ENCODE measurements at regions of chr9 and their contacts with region 1.

Region 1: DNA sequence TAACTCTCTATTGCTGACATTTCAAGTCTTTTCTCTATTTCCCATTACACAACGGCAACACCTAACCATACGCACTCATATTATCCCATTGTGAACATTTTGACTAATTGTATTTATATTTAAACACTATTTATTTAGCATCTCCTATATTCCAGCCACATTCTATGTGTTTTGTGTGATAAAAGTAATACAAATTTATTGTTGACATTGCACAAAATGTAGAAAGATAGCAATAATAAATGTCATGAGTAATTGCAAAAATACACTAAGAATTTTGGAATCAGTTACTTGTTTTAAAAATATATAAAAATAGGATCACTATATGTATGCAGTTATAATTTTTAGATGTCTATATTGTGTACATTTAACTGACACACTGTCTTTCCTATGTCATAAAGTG is 413.0 kb upstream of the PTPRD start:
- DNase-seq: no peak
- ATAC-seq: no peak
- H3K4me3 ChIP-seq: no peak overlapping the region
- H3K27ac ChIP-seq: no peak overlapping the region
- H3K4me1 ChIP-seq: no peaks in the 10 kb centered on the region
- H3K27me3 ChIP-seq: no peaks in the 10 kb centered on the region
- CTCF ChIP-seq: no peak
- EP300 ChIP-seq: no peak
- POLR2A ChIP-seq: no peak
- RAD21 ChIP-seq: no peak

Region 2: DNA sequence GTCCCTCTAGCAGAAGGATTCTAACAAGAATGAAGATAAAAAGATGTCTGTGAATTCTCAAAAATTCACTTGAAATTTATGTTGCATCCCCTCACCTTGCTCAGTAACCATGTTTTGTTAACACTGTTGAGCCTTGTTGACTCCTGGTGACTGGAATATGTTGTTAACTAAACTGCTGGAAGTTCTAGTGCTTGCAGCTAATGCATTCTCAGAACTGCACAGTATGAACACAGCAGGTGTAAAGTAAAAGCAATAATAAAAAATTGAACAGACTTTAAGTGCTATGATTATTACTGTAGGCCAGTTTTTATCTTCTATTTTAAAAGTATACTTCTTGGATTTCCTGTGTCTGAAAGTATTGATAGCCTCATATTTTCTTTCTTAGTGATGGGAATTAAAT is 24.2 kb before region 1 on chr9:
- CTCF ChIA-PET with region 1: no interaction called
- POLR2A ChIA-PET with region 1: no interaction called
- RAD21 ChIA-PET with region 1: no interaction called
- SMC1A ChIA-PET with region 1: no interaction called
- in situ Hi-C with region 1: no loop called
- intact Hi-C with region 1: no loop called
- DNase-seq: no peak
- ATAC-seq: no peak
- H3K4me3 ChIP-seq: no peak overlapping the region
- H3K27ac ChIP-seq: no peak overlapping the region
- H3K4me1 ChIP-seq: no peaks in the 10 kb centered on the region
- H3K27me3 ChIP-seq: no peaks in the 10 kb centered on the region
- CTCF ChIP-seq: no peak
- EP300 ChIP-seq: no peak
- POLR2A ChIP-seq: no peak
- RAD21 ChIP-seq: no peak

Region 3: GRCh38 chr9:11011696-11012095 is 14.1 kb before region 1 on chr9:
- CTCF ChIA-PET with region 1: no interaction called
- POLR2A ChIA-PET with region 1: no interaction called
- RAD21 ChIA-PET with region 1: no interaction called
- SMC1A ChIA-PET with region 1: no interaction called
- in situ Hi-C with region 1: no loop called
- intact Hi-C with region 1: no loop called
- DNase-seq: no peak
- ATAC-seq: no peak
- H3K4me3 ChIP-seq: no peak overlapping the region
- H3K27ac ChIP-seq: no peak overlapping the region
- H3K4me1 ChIP-seq: no peaks in the 10 kb centered on the region
- H3K27me3 ChIP-seq: no peaks in the 10 kb centered on the region
- CTCF ChIP-seq: no peak
- EP300 ChIP-seq: no peak
- POLR2A ChIP-seq: no peak
- RAD21 ChIP-seq: no peak

Region 4: GRCh38 chr9:11045589-11045988 is 19.8 kb after region 1 on chr9:
- CTCF ChIA-PET with region 1: interaction called, 3 read pairs
- POLR2A ChIA-PET with region 1: no interaction called
- RAD21 ChIA-PET with region 1: no interaction called
- SMC1A ChIA-PET with region 1: interaction called, 11 read pairs
- in situ Hi-C with region 1: no loop called
- intact Hi-C with region 1: no loop called
- DNase-seq: no peak
- ATAC-seq: no peak
- H3K4me3 ChIP-seq: no peak overlapping the region
- H3K27ac ChIP-seq: no peak overlapping the region
- H3K4me1 ChIP-seq: no peaks in the 10 kb centered on the region
- H3K27me3 ChIP-seq: no peaks in the 10 kb centered on the region
- CTCF ChIP-seq: no peak
- EP300 ChIP-seq: no peak
- POLR2A ChIP-seq: no peak
- RAD21 ChIP-seq: no peak

Measured in GM12878 (cell line).